ENCODE measurements at regions of chr15 and their contacts with region 1.

Region 1: DNA sequence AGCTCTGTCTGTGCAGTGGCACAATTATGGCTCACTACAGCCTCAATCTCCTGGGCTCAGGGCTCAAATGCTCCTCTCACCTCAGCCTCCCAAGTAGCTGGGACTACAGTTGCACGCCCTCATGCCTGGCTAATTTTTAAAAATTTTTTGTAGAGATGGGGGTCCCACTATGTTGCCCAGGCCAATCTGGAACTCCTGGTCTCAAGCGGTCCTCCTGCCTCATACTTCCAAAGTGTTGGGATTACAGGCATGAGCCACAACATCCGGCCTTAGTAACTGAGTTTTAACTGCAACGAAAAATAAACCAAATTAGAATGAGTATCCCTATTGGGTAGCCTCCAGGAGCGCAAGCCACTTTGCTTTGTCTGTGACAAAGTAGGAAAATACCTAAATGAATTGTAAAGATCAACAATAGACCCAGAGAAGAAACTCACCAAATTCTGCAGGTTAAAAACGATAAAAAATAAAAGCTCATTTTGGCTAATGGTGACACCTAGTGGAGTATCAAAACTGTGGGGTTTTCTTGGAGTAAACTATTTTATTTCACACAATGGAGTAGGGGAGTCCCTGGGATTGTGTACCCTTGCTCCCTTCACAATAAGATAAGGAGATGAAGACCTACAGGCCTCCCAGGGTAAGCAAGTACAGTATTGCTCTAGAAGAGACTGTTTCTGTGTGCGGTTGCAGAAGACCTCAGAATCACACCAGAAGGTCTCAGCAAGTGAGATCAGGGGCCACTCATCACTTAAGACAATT is 21.0 kb upstream of the CA12 start:
- DNase-seq: peak in 1 of 2 donors; percentile 64
- ATAC-seq: peak; percentile 49 to 56 (median 56)
- H3K4me3 ChIP-seq: no peak overlapping the region
- H3K4me3 Mint-ChIP-seq: no peak overlapping the region
- H3K27ac ChIP-seq: no peak overlapping the region
- H3K27ac Mint-ChIP-seq: no peak overlapping the region
- H3K4me1 ChIP-seq: no peaks in the 10 kb centered on the region
- H3K4me1 Mint-ChIP-seq: peaks cover 0 to 4% of the 10 kb centered on the region in 2 donors
- H3K27me3 ChIP-seq: no peaks in the 10 kb centered on the region
- H3K27me3 Mint-ChIP-seq: peaks cover 10 to 17% of the 10 kb centered on the region in 2 donors
- CTCF ChIP-seq: peak; percentile 69

Region 2: DNA sequence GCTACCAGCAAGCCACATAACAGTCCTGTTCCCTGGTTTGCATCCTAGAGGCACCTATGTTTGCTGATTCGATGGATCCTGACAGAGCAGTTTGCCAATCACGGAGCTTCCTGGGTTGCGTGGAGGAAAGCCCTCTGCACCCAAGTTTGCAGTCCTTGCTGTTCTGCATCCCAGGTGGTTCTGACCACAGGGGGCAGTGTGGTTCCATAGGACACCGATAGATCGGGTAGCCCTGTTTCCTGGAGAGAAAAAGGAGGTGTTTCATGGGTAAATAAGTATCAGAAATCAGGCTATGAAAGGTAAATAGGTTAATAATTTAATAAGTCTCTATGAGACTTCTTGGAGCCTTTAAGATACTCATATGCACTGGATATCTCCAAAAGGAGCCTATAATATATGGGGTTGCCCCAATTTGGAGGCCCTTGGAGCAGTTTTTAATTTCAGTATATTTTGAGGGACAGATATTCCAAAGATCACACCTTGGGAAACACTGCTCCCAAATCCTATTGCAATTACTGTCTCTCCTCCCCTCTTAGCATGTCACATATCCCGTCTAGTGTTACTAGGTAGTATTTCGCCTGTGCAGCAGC is 554.7 kb before region 1 on chr15:
- intact Hi-C with region 1: loop called (anchors 5 kb)
- DNase-seq: peak; percentile 21 to 61
- ATAC-seq: no peak
- H3K4me3 ChIP-seq: no peak overlapping the region
- H3K4me3 Mint-ChIP-seq: no peak overlapping the region
- H3K27ac ChIP-seq: no peak overlapping the region
- H3K27ac Mint-ChIP-seq: no peak overlapping the region
- H3K4me1 ChIP-seq: no peaks in the 10 kb centered on the region
- H3K4me1 Mint-ChIP-seq: no peaks in the 10 kb centered on the region
- H3K27me3 ChIP-seq: no peaks in the 10 kb centered on the region
- H3K27me3 Mint-ChIP-seq: peaks cover 3 to 7% of the 10 kb centered on the region in 2 donors
- CTCF ChIP-seq: peak; percentile 40

Region 3: DNA sequence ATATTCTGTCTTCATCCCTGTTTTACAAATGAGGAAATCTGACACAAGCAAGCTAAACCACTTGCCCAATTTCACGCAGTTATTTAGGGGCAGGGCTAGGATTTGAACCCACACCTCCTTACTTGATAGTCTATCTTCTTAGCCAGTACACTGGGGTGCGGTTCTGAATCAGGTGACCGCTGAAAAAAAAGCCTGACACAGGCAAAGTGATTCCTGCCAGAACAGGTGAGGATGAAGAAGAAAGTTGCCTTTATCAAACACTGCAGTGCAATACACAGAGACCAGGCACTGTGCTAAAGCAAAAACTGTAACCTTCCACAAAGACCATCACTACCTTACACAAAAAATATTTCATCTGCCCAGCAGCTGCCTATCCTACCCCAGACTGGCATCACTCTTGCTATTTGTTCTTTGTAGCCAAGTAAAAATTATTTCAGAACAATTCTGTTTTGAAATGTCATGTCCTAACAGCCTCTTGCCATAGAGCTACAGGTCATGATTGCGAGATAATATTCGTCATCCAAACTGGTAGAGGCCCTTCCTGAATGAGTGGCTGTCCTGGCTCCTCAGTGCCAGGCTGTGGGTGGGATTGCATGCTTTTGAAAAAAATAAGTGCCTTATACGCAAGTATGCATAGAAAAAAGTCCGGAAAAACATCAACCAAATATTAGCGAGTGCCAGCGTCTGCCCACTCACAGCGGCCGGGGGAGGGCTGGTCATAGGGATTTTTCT is 502.4 kb before region 1 on chr15:
- intact Hi-C with region 1: loop called (anchors 5 kb)
- DNase-seq: no peak
- ATAC-seq: no peak
- H3K4me3 ChIP-seq: no peak overlapping the region
- H3K4me3 Mint-ChIP-seq: no peak overlapping the region
- H3K27ac ChIP-seq: no peak overlapping the region
- H3K27ac Mint-ChIP-seq: no peak overlapping the region
- H3K4me1 ChIP-seq: no peaks in the 10 kb centered on the region
- H3K4me1 Mint-ChIP-seq: no peaks in the 10 kb centered on the region
- H3K27me3 ChIP-seq: no peaks in the 10 kb centered on the region
- H3K27me3 Mint-ChIP-seq: no peaks in the 10 kb centered on the region
- CTCF ChIP-seq: no peak

Region 4: DNA sequence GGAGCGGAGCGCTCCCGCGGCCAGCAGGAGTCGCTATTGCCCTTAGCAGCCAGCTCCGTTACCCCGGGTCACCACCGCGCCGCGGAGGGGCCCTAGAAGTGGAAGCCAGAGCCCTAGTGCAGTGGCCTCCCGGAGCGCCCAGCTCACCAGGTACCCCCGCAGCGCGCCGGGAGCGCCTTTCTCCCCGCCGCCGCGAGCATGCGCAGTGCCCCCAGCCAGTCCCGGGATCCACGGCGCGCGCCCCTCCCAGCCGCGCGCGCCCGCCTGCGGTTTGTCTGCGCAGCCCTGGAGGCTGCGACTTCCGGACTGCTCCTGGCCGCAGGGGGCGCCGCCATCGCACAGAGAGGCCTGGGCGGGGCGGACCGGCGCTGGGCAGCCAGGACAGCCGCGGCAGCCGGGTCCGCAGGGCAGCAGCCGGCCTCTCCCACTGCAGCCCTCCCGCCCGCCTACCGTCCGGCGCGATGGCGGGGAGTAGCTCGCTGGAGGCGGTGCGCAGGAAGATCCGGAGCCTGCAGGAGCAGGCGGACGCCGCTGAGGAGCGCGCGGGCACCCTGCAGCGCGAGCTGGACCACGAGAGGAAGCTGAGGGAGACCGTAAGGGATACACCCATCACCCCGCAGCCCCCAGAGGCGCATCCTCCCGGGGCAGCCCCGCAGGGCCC is 354.4 kb before region 1 on chr15:
- intact Hi-C with region 1: loop called (anchors 1 kb)
- DNase-seq: peak; percentile 83 to 93
- ATAC-seq: peak; percentile 86 to 92 (median 87)
- H3K4me3 ChIP-seq: peak overlapping the region; percentile 61
- H3K4me3 Mint-ChIP-seq: peak overlapping the region; percentile 96
- H3K27ac ChIP-seq: peak overlapping the region; percentile 51
- H3K27ac Mint-ChIP-seq: peak overlapping the region; percentile 77 to 85
- H3K4me1 ChIP-seq: peaks cover 22% of the 10 kb centered on the region
- H3K4me1 Mint-ChIP-seq: peaks cover 39% of the 10 kb centered on the region in 2 donors
- H3K27me3 ChIP-seq: peaks cover 30% of the 10 kb centered on the region
- H3K27me3 Mint-ChIP-seq: peaks cover 35 to 36% of the 10 kb centered on the region in 2 donors
- CTCF ChIP-seq: peak; percentile 98

Region 5: GRCh38 chr15:63166219-63166618 is 236.5 kb before region 1 on chr15:
- intact Hi-C with region 1: loop called (anchors 5 kb)
- DNase-seq: peak in 1 of 2 donors; percentile 43
- ATAC-seq: peak; percentile 43 to 63 (median 60)
- H3K4me3 ChIP-seq: no peak overlapping the region
- H3K4me3 Mint-ChIP-seq: no peak overlapping the region
- H3K27ac ChIP-seq: no peak overlapping the region
- H3K27ac Mint-ChIP-seq: no peak overlapping the region
- H3K4me1 ChIP-seq: no peaks in the 10 kb centered on the region
- H3K4me1 Mint-ChIP-seq: peaks cover 0 to 5% of the 10 kb centered on the region in 2 donors
- H3K27me3 ChIP-seq: no peaks in the 10 kb centered on the region
- H3K27me3 Mint-ChIP-seq: no peaks in the 10 kb centered on the region
- CTCF ChIP-seq: no peak

Region 6: GRCh38 chr15:63288778-63289378 is 113.8 kb before region 1 on chr15:
- intact Hi-C with region 1: loop called (anchors 1 kb)
- DNase-seq: peak in 1 of 2 donors; percentile 73
- ATAC-seq: peak; percentile 69 to 78 (median 77)
- H3K4me3 ChIP-seq: no peak overlapping the region
- H3K4me3 Mint-ChIP-seq: no peak overlapping the region
- H3K27ac ChIP-seq: no peak overlapping the region
- H3K27ac Mint-ChIP-seq: peak overlapping the region in 1 of 2 donors; percentile 54
- H3K4me1 ChIP-seq: no peaks in the 10 kb centered on the region
- H3K4me1 Mint-ChIP-seq: peaks cover 6 to 7% of the 10 kb centered on the region in 2 donors
- H3K27me3 ChIP-seq: no peaks in the 10 kb centered on the region
- H3K27me3 Mint-ChIP-seq: no peaks in the 10 kb centered on the region
- CTCF ChIP-seq: peak; percentile 67

Region 7: DNA sequence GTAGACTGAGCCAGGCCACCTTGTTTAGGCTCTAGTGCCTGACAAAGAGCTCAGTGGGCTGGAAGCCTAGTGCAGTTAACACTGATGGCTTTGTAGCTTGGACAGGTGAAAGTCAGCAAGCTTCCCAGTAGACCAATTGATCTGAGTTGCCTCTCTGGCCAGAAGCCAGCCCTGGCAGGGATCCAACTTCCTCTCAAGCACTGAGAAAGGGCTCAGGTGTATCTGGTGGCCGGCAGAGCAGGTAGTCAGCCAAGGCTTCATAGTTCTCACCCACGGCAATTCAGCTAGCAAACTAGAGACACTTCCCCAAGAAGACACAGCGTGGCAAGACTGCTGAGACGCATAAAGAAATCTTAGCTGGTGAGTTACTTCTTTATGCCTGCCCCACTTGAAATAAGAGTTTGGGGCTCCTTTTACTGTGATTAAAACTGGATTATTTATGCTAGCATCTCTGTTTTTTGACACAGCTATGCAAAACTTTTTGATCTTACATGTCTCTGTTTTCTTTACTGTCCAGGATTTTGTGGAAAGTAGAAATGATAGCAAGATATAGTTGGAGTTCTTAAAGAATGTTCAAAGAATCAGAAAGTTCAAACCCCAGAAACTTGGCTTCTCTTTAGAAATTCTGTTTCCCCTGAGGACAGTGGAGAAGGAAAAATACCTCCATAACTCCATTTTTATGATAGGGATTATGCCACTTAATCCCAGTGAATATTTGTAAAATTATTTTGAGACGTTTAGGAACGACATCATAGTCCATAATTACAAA is 12.6 kb before region 1 on chr15:
- intact Hi-C with region 1: no loop called
- DNase-seq: peak in 1 of 2 donors; percentile 36
- ATAC-seq: no peak
- H3K4me3 ChIP-seq: no peak overlapping the region
- H3K4me3 Mint-ChIP-seq: no peak overlapping the region
- H3K27ac ChIP-seq: no peak overlapping the region
- H3K27ac Mint-ChIP-seq: no peak overlapping the region
- H3K4me1 ChIP-seq: no peaks in the 10 kb centered on the region
- H3K4me1 Mint-ChIP-seq: peaks cover 5 to 9% of the 10 kb centered on the region in 2 donors
- H3K27me3 ChIP-seq: peaks cover 3% of the 10 kb centered on the region
- H3K27me3 Mint-ChIP-seq: peaks cover 12 to 13% of the 10 kb centered on the region in 2 donors
- CTCF ChIP-seq: no peak

Measured in natural killer cell (primary cell).